Dendritic cell treated with granulocyte-macrophage colony-stimulating factor and Interleukin-4, amounts not matched to agents 40 ng/mL and 50 ng/mL, for 4 days (primary cell): ENCODE measurements at regions of chr13 and their contacts with region 1.

Region 1: GRCh38 chr13:50635504-50635903 is 208.0 kb downstream of the DLEU7 start:
- H3K4me3 Mint-ChIP-seq: no peak overlapping the region
- H3K27ac Mint-ChIP-seq: peak overlapping the region; percentile 94
- H3K4me1 Mint-ChIP-seq: peaks cover 46% of the 10 kb centered on the region
- H3K27me3 Mint-ChIP-seq: no peaks in the 10 kb centered on the region

Region 2: DNA sequence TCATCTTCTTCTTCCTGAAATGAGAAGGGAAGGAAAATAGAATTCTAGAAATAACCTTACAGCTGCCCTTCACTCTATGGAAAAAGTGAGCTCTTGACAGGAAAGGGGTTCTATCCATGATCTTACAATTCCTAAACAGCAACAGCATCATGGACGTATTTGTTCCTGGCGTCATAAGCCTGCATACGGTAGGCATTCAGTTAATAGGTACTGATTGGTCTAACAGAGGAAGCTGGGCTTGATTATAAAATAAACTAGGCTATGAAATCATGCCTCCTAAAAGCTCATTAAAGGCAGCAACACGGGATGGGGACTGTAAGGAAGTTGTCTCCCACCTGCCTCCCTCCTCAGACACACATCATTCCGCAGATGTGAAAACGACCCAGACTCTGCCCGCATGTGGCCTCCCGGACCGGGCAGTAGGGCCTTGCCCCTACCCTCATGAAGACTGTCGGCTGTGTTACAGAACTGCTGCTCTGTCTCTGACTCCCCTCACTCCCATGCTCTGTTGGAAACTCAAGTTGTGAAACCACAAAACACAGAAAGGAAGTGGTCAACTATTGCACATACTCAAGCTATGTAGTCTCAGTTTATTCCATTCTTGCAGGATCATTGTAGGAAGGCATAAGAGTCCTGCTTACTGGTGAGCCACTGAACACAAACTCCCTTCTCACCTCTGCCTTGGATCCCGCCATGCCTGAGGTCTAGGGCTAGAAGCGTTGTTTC is 78.2 kb after region 1 on chr13:
- intact Hi-C with region 1: loop called (anchors 5 kb)
- H3K4me3 Mint-ChIP-seq: peak overlapping the region; percentile 44
- H3K27ac Mint-ChIP-seq: peak overlapping the region; percentile 83
- H3K4me1 Mint-ChIP-seq: peaks cover 39% of the 10 kb centered on the region
- H3K27me3 Mint-ChIP-seq: no peaks in the 10 kb centered on the region

Region 3: DNA sequence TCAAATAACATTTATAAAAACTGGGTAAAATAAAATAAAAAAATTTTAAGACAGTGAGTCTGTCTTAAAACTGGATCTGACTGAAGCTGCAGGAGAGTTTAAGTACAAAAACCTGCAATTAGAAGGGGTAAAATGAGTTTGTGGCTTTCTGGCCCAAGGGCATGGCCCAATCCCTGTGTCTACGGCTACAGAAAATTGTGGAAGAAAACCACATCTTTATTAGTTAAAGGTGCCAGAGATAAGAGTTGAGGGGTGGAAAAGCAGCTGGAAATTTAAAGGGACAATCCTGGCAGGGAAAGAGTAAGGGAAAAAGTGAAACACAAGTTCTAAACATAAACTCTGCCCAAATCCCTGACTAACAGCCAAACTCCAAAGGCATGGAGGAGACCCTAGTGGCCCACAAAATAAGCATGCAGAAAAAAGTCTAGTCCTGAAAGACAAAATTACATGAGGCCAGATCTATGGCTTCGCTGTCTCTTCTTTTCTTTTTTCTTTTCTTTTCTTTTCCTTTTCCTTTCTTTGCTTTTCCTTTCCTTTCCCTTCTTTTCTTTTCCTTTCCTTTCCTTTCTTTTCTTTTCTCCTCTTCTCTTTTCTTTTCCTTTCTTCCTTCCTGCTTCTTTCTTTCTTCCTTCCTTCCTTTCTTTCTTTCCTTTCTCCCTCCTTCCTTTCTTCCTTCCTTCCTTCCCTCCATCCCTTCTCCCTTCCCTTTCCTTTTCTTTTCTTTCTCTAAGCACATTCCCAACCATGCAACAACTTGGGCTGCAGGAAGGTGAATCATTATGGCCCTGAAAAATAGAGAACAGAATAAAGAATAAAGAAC is 231.5 kb after region 1 on chr13:
- intact Hi-C with region 1: no loop called
- H3K4me3 Mint-ChIP-seq: no peak overlapping the region
- H3K27ac Mint-ChIP-seq: no peak overlapping the region
- H3K4me1 Mint-ChIP-seq: peaks cover 6% of the 10 kb centered on the region
- H3K27me3 Mint-ChIP-seq: no peaks in the 10 kb centered on the region